ENCODE measurements at regions of chr5 and their contacts with region 1.

Region 1: GRCh38 chr5:86500947-86501346 is 116.8 kb upstream of the COX7C start:
- DNase-seq: peak; percentile 66
- ATAC-seq: peak; percentile 98
- H3K4me3 ChIP-seq: no peak overlapping the region
- H3K27ac ChIP-seq: no peak overlapping the region
- H3K4me1 ChIP-seq: no peaks in the 10 kb centered on the region
- H3K27me3 ChIP-seq: no peaks in the 10 kb centered on the region
- CTCF ChIP-seq: peak; percentile 80

Region 2: GRCh38 chr5:85906460-85906859 is 594.5 kb before region 1 on chr5:
- CTCF ChIA-PET with region 1: no interaction called
- POLR2A ChIA-PET with region 1: no interaction called
- intact Hi-C with region 1: loop called (anchors 10 kb)
- DNase-seq: no peak
- ATAC-seq: no peak
- H3K4me3 ChIP-seq: no peak overlapping the region
- H3K27ac ChIP-seq: no peak overlapping the region
- H3K4me1 ChIP-seq: no peaks in the 10 kb centered on the region
- H3K27me3 ChIP-seq: no peaks in the 10 kb centered on the region
- CTCF ChIP-seq: no peak

Region 3: DNA sequence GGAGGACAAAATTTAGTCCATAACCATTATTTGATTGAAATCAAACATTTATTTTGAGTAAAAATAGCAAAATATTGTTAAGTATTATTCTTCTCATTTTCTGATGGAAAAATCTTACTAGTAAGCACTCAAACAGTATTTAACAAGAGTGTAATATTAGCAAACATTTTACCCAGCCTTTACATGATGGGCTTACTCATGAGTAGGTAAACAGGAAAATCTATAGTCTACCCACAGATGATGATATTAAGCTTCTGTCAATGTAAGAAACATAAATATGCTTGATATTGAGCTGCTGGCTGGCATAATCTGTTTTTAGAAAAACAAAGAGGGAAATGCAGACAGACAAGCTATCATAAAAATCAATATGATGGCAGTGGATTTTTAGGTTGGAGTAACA is 301.7 kb before region 1 on chr5:
- CTCF ChIA-PET with region 1: no interaction called
- POLR2A ChIA-PET with region 1: no interaction called
- intact Hi-C with region 1: loop called (anchors 2 kb)
- DNase-seq: peak; percentile 26
- ATAC-seq: peak; percentile 96
- H3K4me3 ChIP-seq: no peak overlapping the region
- H3K27ac ChIP-seq: no peak overlapping the region
- H3K4me1 ChIP-seq: no peaks in the 10 kb centered on the region
- H3K27me3 ChIP-seq: no peaks in the 10 kb centered on the region
- CTCF ChIP-seq: no peak

Region 4: DNA sequence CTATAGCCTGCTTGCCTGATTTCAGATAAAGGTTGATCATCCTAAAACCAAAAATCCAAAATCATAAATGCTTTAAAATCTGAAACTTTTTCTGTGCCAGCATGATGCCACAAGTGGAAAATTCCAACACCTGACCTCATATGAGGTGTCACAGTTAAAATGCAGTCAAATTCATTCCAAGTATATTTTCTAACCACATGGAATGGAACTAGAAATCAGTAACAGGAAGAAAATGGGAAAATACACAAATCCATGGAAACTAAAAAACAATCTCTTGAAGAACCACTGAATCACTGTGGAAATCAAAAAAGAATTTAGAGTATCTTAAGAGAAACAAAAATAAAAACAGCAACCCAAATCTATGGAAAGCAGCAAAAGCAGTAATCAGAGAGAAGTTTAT is 180.7 kb before region 1 on chr5:
- CTCF ChIA-PET with region 1: no interaction called
- POLR2A ChIA-PET with region 1: no interaction called
- intact Hi-C with region 1: loop called (anchors 10 kb)
- DNase-seq: no peak
- ATAC-seq: no peak; the same call in 1 of the 2 replicates
- H3K4me3 ChIP-seq: no peak overlapping the region
- H3K27ac ChIP-seq: no peak overlapping the region
- H3K4me1 ChIP-seq: no peaks in the 10 kb centered on the region
- H3K27me3 ChIP-seq: no peaks in the 10 kb centered on the region
- CTCF ChIP-seq: no peak

Region 5: DNA sequence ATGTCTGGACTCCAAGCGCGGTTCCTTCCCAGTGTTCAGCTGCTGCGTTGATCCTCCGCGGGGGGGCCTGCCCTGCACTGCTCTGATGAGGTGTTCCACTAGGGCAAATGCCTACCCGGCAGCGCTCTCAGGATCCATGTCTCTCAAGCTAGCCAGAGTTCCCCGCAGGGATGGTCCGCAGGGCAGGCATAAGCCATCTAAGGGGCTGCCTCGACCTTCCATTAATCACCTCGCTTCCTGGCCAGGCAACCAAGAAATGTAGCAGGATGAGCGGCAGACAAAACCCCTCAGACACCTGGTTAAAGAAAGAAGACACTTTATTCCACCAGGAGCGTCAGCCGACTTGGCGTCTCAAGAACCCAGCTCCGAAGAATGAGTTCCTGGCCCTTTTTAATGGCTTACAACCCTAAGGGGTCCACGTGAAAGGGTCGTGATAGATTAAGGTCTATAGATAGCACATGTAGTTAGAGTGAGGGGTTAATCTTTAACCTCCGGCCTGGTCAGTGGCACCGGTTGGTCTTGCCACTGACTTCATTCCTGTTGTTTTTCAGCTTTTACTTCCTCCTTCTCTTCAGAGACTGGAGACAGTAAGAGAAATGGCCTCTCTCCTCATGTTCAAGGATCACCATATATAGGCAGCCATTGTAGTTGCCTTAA is 69.6 kb after region 1 on chr5:
- CTCF ChIA-PET with region 1: no interaction called
- POLR2A ChIA-PET with region 1: no interaction called
- intact Hi-C with region 1: no loop called
- DNase-seq: peak; percentile 77
- ATAC-seq: peak; percentile 98
- H3K4me3 ChIP-seq: peak overlapping the region; percentile 86
- H3K27ac ChIP-seq: no peak overlapping the region
- H3K4me1 ChIP-seq: peaks cover 6% of the 10 kb centered on the region
- H3K27me3 ChIP-seq: no peaks in the 10 kb centered on the region
- CTCF ChIP-seq: no peak

Region 6: GRCh38 chr5:86880785-86881492 is 380.0 kb after region 1 on chr5:
- CTCF ChIA-PET with region 1: no interaction called
- POLR2A ChIA-PET with region 1: no interaction called
- intact Hi-C with region 1: loop called (anchors 1 kb)
- DNase-seq: peak; percentile 96
- ATAC-seq: peak; percentile 91
- H3K4me3 ChIP-seq: no peak overlapping the region
- H3K27ac ChIP-seq: no peak overlapping the region
- H3K4me1 ChIP-seq: peaks cover 13% of the 10 kb centered on the region; the same call in 1 of the 2 replicates
- H3K27me3 ChIP-seq: no peaks in the 10 kb centered on the region
- CTCF ChIP-seq: peak; percentile 100